CD14-positive monocyte (primary cell): ENCODE measurements at regions of chr17 and their contacts with region 1.

Region 1: GRCh38 chr17:37844158-37844976 is 79.8 kb upstream of the TBC1D3K start:
- DNase-seq: peak; percentile 69 to 91 (median 91)
- H3K4me3 ChIP-seq: peak overlapping the region; percentile 46 to 75 (median 57)
- H3K4me3 Mint-ChIP-seq: peak overlapping the region; percentile 80 to 89
- H3K27ac ChIP-seq: peak overlapping the region; percentile 88 to 96
- H3K27ac Mint-ChIP-seq: peak overlapping the region; percentile 86 to 94 (median 92)
- H3K4me1 ChIP-seq: peaks cover 50 to 52% of the 10 kb centered on the region in 2 donors
- H3K4me1 Mint-ChIP-seq: peaks cover 53% of the 10 kb centered on the region
- H3K27me3 ChIP-seq: no peaks in the 10 kb centered on the region
- H3K27me3 Mint-ChIP-seq: peaks cover 0 to 8% (median 0%) of the 10 kb centered on the region in 3 donors
- CTCF ChIP-seq: peak; percentile 98

Region 2: GRCh38 chr17:37761059-37761458 is 83.3 kb before region 1 on chr17:
- intact Hi-C with region 1: loop called in 1 of 2 experiments (anchors 2 kb)
- DNase-seq: peak; percentile 34 to 76 (median 72)
- H3K4me3 ChIP-seq: peak overlapping the region; percentile 15 to 68 (median 51)
- H3K4me3 Mint-ChIP-seq: peak overlapping the region; percentile 64 to 80
- H3K27ac ChIP-seq: peak overlapping the region in 1 of 2 donors; percentile 66
- H3K27ac Mint-ChIP-seq: peak overlapping the region in 6 of 7 donors; percentile 48 to 87 (median 65)
- H3K4me1 ChIP-seq: peaks cover 22 to 44% of the 10 kb centered on the region in 2 donors
- H3K4me1 Mint-ChIP-seq: peaks cover 43% of the 10 kb centered on the region
- H3K27me3 ChIP-seq: no peaks in the 10 kb centered on the region
- H3K27me3 Mint-ChIP-seq: peaks cover 7 to 12% (median 11%) of the 10 kb centered on the region in 3 donors
- CTCF ChIP-seq: no peak